CD4-positive, alpha-beta memory T cell (primary cell): ENCODE measurements at regions of chr17 and their contacts with region 1.

Region 1: GRCh38 chr17:81683584-81684237 is at the starts of genes ARL16 and HGS:
- DNase-seq: peak; percentile 97 to 98 (median 98)
- H3K4me3 ChIP-seq: peak within 1 kb of the TSS; percentile 80 to 93
- H3K4me3 Mint-ChIP-seq: peak within 1 kb of the TSS; percentile 94 to 99 (median 97)
- H3K27ac ChIP-seq: peak within 1 kb of the TSS; percentile 83
- H3K27ac Mint-ChIP-seq: peak within 1 kb of the TSS; percentile 84 to 99 (median 96)
- H3K4me1 ChIP-seq: peaks cover 31% of the 10 kb centered on the region
- H3K4me1 Mint-ChIP-seq: peaks cover 20 to 54% (median 27%) of the 10 kb centered on the region in 4 donors
- H3K27me3 ChIP-seq: no peaks in the 10 kb centered on the region
- H3K27me3 Mint-ChIP-seq: no peaks in the 10 kb centered on the region
- total RNA-seq, gene ARL16: 25.9 to 27.7 TPM
- total RNA-seq, gene HGS: 182 to 206 TPM

Region 2: DNA sequence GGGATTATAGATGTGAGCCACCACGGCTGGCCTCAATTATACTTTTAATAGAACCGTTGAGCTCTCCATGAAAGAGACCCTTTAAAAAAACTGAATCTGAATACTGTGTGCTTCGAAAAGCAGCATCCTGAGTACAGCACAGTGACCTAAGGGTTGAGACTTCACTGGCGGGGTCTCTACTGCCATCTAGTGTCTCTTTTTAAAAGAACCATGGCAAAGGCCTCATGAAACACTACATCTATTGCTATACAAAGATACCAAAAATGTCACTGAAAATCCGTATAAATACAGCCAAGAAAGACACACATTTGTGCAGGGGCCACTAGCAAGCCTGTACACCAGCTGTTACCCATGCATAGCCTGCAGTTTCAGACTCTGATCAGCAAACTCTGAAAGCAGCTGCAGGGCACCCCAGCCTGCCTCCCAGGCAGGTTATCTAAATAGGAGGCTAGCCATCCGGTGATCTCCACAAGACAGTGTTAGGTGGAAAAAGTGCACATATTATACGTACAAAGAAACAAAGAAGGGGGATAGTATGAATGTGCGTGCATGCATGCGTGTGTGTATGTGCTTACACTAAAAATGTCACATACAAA is 82.1 kb before region 1 on chr17:
- CTCF ChIA-PET with region 1: no interaction called
- POLR2A ChIA-PET with region 1: no interaction called
- intact Hi-C with region 1: no loop called
- DNase-seq: peak in 4 of 5 donors; percentile 56 to 66 (median 61)
- H3K4me3 ChIP-seq: no peak overlapping the region
- H3K4me3 Mint-ChIP-seq: no peak overlapping the region
- H3K27ac ChIP-seq: no peak overlapping the region
- H3K27ac Mint-ChIP-seq: peak overlapping the region in 4 of 7 donors; percentile 1 to 79 (median 55)
- H3K4me1 ChIP-seq: no peaks in the 10 kb centered on the region
- H3K4me1 Mint-ChIP-seq: peaks cover 3 to 14% (median 7%) of the 10 kb centered on the region in 4 donors
- H3K27me3 ChIP-seq: no peaks in the 10 kb centered on the region
- H3K27me3 Mint-ChIP-seq: no peaks in the 10 kb centered on the region

Region 3: DNA sequence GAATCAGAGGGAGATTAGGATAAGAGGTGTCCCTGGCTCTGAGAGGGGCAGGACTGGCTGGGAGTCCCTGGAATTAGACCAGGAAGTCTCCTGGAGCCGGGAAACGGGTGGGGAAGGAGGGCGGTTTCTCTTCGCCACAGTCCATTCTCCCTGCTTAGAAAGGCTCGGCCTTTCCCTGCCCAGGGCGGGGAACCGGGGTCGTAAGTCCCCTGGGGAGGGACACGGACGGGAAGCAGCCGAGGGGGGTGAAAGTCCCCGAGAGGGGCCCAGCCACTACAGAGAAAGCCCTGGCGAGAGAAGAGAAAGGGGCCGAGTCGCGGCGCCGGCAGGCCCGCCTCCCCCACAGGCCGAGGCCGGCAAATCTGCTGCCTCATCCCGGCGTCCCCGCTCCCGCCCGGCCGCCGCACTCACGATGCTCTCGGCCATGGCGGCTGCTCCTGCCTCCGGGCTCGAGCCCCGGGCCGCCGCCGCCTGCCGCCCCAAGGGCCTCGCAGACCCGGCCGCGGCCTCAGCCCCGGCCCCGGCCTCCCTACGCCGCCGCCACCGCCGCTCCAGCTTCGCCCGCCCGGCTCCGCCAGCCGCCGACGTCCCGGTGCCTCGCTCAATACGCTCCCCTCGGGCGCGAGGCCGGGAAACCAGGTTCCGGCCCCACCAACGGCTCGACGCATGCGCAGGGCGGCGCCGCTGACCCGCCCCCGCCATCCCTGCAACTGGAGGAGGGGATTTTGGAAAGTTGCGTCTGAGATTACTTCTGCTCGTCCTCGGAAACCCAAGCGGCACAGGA is 47.0 kb before region 1 on chr17 and contains the starts of genes NPLOC4 and TSPAN10:
- CTCF ChIA-PET with region 1: no interaction called
- POLR2A ChIA-PET with region 1: interaction called, 3 read pairs
- intact Hi-C with region 1: loop called (anchors 1 kb)
- DNase-seq: peak; percentile 64 to 83 (median 79)
- H3K4me3 ChIP-seq: peak within 1 kb of the TSS; percentile 68 to 76
- H3K4me3 Mint-ChIP-seq: peak within 1 kb of the TSS; percentile 92 to 97 (median 95)
- H3K27ac ChIP-seq: peak within 1 kb of the TSS; percentile 65
- H3K27ac Mint-ChIP-seq: peak within 1 kb of the TSS; percentile 85 to 97 (median 95)
- H3K4me1 ChIP-seq: peaks cover 34% of the 10 kb centered on the region
- H3K4me1 Mint-ChIP-seq: peaks cover 9 to 26% (median 17%) of the 10 kb centered on the region in 4 donors
- H3K27me3 ChIP-seq: no peaks in the 10 kb centered on the region
- H3K27me3 Mint-ChIP-seq: no peaks in the 10 kb centered on the region
- total RNA-seq, gene NPLOC4: 91.0 to 105 TPM
- total RNA-seq, gene TSPAN10: 1.1 to 1.2 TPM

Region 4: DNA sequence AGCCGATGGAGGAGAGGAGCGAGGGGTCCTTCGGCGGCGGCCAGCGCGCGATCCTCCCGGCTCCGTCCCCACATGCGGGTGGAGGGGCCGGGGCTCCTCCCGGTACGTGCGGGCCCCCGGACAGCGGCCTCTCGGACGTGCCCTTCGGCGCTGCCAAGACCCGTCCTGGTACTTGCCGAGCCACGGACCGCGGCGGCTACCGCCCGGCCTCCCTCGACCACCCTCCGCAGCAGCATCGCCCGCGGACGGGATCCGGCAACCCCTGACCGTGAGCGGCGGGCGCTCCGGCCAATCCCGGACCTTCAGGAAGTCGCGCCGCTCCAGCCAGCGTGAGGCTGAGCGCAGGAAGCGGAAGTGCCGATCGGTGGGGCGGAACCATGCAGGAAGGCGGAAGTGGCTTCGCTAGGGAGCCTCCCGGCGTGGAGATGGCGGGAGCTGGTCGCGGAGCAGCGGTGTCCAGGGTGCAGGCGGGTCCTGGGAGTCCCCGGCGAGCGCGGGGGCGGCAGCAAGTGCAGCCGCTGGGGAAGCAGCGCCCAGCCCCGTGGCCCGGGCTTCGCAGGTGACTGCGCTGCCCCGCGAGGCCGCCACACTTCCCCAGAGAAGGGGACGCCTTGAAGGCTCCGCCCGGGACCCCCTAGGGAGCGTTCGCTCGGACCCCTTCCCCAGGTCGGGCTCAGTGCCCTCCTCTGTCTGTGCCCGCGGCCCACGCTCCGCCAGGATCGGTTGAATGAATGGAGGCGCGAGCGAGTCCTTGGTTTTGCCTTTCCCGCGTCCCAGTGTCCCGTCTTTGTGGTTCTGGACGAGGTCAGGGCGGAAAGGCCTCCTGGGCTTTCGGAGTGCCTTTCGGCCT is 17.1 kb before region 1 on chr17 and contains the starts of genes CCDC137 and OXLD1:
- CTCF ChIA-PET with region 1: no interaction called
- POLR2A ChIA-PET with region 1: interaction called, 65 read pairs
- intact Hi-C with region 1: loop called (anchors 1 kb)
- DNase-seq: peak; percentile 88 to 92 (median 90)
- H3K4me3 ChIP-seq: peak within 1 kb of the TSS; percentile 81 to 85
- H3K4me3 Mint-ChIP-seq: peak within 1 kb of the TSS; percentile 90 to 98 (median 95)
- H3K27ac ChIP-seq: peak within 1 kb of the TSS; percentile 80
- H3K27ac Mint-ChIP-seq: peak within 1 kb of the TSS; percentile 88 to 97 (median 96)
- H3K4me1 ChIP-seq: peaks cover 60% of the 10 kb centered on the region
- H3K4me1 Mint-ChIP-seq: peaks cover 14 to 69% (median 37%) of the 10 kb centered on the region in 4 donors
- H3K27me3 ChIP-seq: no peaks in the 10 kb centered on the region
- H3K27me3 Mint-ChIP-seq: no peaks in the 10 kb centered on the region
- total RNA-seq, gene CCDC137: 28.0 to 29.3 TPM
- total RNA-seq, gene OXLD1: 52.5 to 60.8 TPM

Region 5: DNA sequence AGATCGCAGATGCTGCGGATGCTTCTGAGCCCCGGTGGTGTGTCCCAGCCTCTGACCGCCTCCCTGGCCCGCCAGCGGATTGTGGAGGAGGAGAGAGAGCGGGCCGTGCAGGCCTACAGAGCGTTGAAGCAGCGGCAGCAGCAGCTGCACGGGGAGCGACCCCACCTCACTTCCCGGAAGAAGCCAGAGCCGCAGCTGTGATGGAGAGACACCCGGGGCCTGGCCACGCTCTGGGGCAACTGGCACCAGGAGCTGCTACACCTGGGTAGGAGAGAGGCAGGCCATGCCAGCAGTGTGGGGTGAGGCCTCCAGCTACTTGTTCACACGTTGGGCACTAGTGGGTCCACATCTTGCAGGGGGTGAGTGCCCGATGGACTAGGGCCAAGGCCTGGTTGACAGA is 11.2 kb before region 1 on chr17:
- CTCF ChIA-PET with region 1: interaction called, 6 read pairs
- POLR2A ChIA-PET with region 1: interaction called, 14 read pairs
- intact Hi-C with region 1: no loop called
- DNase-seq: peak in 1 of 5 donors; percentile 27
- H3K4me3 ChIP-seq: no peak overlapping the region
- H3K4me3 Mint-ChIP-seq: no peak overlapping the region
- H3K27ac ChIP-seq: no peak overlapping the region
- H3K27ac Mint-ChIP-seq: no peak overlapping the region
- H3K4me1 ChIP-seq: peaks cover 12% of the 10 kb centered on the region
- H3K4me1 Mint-ChIP-seq: peaks cover 11 to 25% (median 18%) of the 10 kb centered on the region in 4 donors
- H3K27me3 ChIP-seq: no peaks in the 10 kb centered on the region
- H3K27me3 Mint-ChIP-seq: no peaks in the 10 kb centered on the region

Region 6: DNA sequence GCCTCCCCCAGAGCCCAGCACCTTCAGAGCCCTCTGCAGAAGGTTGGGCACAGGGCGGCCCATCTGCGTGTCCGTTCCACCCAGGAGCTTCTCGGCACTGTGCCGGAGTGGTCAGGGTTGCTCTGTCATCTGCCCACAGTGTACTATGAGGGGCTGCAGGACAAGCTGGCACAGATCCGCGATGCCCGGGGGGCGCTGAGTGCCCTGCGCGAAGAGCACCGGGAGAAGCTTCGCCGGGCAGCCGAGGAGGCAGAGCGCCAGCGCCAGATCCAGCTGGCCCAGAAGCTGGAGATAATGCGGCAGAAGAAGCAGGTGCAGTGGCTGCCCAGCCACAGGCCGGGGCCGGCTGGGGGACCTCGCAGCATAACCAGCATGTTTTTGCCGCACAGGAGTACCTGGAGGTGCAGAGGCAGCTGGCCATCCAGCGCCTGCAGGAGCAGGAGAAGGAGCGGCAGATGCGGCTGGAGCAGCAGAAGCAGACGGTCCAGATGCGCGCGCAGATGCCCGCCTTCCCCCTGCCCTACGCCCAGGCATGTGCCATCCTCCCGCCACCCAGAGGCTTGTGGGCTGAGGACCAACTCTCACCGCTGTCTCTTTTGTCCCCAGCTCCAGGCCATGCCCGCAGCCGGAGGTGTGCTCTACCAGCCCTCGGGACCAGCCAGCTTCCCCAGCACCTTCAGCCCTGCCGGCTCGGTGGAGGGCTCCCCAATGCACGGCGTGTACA is 12.7 kb after region 1 on chr17:
- CTCF ChIA-PET with region 1: interaction called, 4 read pairs
- POLR2A ChIA-PET with region 1: interaction called, 67 read pairs
- intact Hi-C with region 1: no loop called
- DNase-seq: no peak
- H3K4me3 ChIP-seq: no peak overlapping the region
- H3K4me3 Mint-ChIP-seq: no peak overlapping the region
- H3K27ac ChIP-seq: no peak overlapping the region
- H3K27ac Mint-ChIP-seq: no peak overlapping the region
- H3K4me1 ChIP-seq: peaks cover 7% of the 10 kb centered on the region
- H3K4me1 Mint-ChIP-seq: peaks cover under 1 to 7% (median 5%) of the 10 kb centered on the region in 4 donors
- H3K27me3 ChIP-seq: no peaks in the 10 kb centered on the region
- H3K27me3 Mint-ChIP-seq: no peaks in the 10 kb centered on the region

Region 7: DNA sequence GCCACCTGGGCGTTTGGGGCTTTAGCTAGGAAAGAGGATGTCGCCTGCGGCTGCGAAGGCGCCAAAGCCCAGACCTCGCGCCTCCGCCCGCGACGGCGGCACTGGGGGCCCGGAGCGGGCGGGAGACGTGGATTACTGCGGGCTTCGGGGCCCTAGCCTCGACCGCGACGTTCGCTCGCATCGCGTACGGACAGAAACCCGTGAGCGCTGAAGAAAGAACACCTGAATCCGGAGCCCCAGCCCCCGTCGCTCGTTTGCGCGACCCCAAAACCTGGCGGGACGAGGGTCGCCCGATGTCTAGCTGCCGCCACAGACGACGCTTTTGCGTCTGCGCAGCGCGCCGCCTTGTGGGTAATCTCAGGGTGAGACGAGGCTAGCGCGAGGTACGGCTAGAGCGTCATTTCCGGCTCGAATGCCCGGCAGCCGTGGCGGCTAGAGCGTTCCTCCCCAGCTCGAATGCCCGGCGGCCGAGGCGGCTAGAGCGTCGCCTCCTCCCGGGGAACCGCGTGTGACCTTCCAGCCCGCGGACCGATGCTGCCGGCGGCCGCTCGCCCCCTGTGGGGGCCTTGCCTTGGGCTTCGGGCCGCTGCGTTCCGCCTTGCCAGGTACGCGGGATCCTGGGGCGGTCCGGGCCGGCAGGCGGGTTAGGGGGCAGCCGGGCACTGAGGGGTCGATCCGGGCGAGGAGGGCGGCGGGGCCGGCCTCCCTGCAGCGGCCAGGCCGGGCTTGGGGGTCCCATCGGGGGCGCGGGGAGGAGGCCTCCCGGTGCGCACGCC is 19.4 kb after region 1 on chr17 and contains the start of gene MRPL12:
- CTCF ChIA-PET with region 1: interaction called, 4 read pairs
- POLR2A ChIA-PET with region 1: interaction called, 67 read pairs
- intact Hi-C with region 1: loop called (anchors 1 kb)
- DNase-seq: peak; percentile 83 to 89 (median 85)
- H3K4me3 ChIP-seq: peak within 1 kb of the TSS; percentile 61 to 63
- H3K4me3 Mint-ChIP-seq: peak within 1 kb of the TSS; percentile 87 to 94 (median 90)
- H3K27ac ChIP-seq: peak within 1 kb of the TSS; percentile 87
- H3K27ac Mint-ChIP-seq: peak within 1 kb of the TSS; percentile 92 to 97 (median 94)
- H3K4me1 ChIP-seq: peaks cover 32% of the 10 kb centered on the region
- H3K4me1 Mint-ChIP-seq: peaks cover 8 to 40% (median 26%) of the 10 kb centered on the region in 4 donors
- H3K27me3 ChIP-seq: no peaks in the 10 kb centered on the region
- H3K27me3 Mint-ChIP-seq: no peaks in the 10 kb centered on the region
- total RNA-seq, gene MRPL12: 21.9 to 25.6 TPM